RWPE1 (cell line): ENCODE measurements at regions of chr4 and their contacts with region 1.

Region 1: GRCh38 chr4:149923736-149924135 is 108.1 kb upstream of the IQCM start:
- DNase-seq: no peak
- H3K27ac ChIP-seq: no peak overlapping the region
- CTCF ChIP-seq: no peak

Region 2: GRCh38 chr4:148442832-148443511 is 1480.8 kb before region 1 on chr4:
- CTCF ChIA-PET with region 1: no interaction called
- POLR2A ChIA-PET with region 1: interaction called, 13 read pairs
- DNase-seq: no peak
- H3K27ac ChIP-seq: no peak overlapping the region
- CTCF ChIP-seq: no peak